Caco-2 (cell line): ENCODE measurements at regions of chr12 and their contacts with region 1.

Region 1: DNA sequence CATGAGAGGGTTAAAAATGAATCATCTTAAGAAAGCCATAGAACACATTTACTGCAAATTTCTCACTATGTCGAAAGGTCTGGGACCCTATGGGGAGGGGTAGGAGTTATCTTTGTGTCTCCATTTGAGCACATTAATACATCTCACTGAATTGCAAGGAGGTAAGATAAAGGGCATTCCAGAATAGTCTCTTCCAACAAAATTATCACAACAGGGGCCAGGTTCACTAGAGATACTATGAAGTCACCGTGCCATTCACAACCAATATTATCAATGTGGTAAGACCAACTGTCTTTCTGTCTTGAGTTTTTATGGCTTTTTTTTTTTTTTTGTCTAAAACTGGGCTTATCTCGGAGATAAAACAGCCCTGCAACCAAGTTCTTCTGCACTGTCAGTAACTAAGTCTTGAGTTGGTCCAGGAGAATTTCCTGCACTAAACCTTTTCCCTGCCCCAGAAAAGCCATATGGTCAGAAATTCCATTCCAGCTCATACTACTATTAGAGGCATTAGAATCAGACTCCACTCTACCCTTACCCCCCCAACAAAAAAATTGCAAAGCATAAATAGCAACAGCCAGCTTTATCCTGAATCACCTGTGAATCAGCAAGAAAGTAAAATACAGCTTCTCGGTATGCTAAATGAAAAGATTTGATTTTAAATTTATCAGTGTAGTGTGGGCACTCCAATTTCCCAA is 79.7 kb downstream of the PTPRR start:
- DNase-seq: peak in 1 of 2 experiments; percentile 44
- H3K4me3 ChIP-seq: no peak overlapping the region
- H3K4me3 Mint-ChIP-seq: no peak overlapping the region
- H3K27ac Mint-ChIP-seq: peak overlapping the region; percentile 48
- H3K4me1 ChIP-seq: peaks cover 31% of the 10 kb centered on the region
- H3K4me1 Mint-ChIP-seq: peaks cover 21% of the 10 kb centered on the region
- H3K27me3 ChIP-seq: no peaks in the 10 kb centered on the region
- H3K27me3 Mint-ChIP-seq: no peaks in the 10 kb centered on the region
- CTCF ChIP-seq: no peak

Region 2: DNA sequence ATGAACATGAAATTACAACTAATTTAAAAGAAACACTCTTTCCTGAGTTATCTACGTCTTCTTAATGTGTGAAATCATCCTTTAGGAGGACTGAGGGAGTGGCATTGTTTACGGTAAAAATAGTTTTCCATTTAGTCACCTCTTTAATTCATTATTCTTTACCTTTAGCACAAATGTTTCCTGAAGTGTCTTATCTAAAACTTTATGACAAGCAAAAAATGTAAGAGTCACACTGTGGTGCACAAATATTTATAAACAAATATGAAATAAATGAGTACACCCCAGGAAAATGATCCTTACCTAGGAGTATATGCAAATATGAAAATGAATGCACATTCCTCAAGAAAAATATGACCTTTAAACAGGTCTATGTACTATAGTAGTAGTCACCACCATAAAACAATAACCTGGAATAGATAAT is 24.8 kb before region 1 on chr12:
- CTCF ChIA-PET with region 1: no interaction called
- POLR2A ChIA-PET with region 1: no interaction called
- intact Hi-C with region 1: loop called (anchors 1 kb)
- DNase-seq: no peak
- H3K4me3 ChIP-seq: no peak overlapping the region
- H3K4me3 Mint-ChIP-seq: no peak overlapping the region
- H3K27ac Mint-ChIP-seq: peak overlapping the region; percentile 73
- H3K4me1 ChIP-seq: peaks cover 15% of the 10 kb centered on the region
- H3K4me1 Mint-ChIP-seq: peaks cover 6% of the 10 kb centered on the region
- H3K27me3 ChIP-seq: no peaks in the 10 kb centered on the region
- H3K27me3 Mint-ChIP-seq: no peaks in the 10 kb centered on the region
- CTCF ChIP-seq: no peak

Region 3: GRCh38 chr12:70823182-70823976 is 17.4 kb before region 1 on chr12:
- CTCF ChIA-PET with region 1: no interaction called
- POLR2A ChIA-PET with region 1: no interaction called
- intact Hi-C with region 1: loop called (anchors 1 kb)
- DNase-seq: no peak
- H3K4me3 ChIP-seq: no peak overlapping the region
- H3K4me3 Mint-ChIP-seq: no peak overlapping the region
- H3K27ac Mint-ChIP-seq: peak overlapping the region; percentile 43
- H3K4me1 ChIP-seq: peaks cover 18% of the 10 kb centered on the region
- H3K4me1 Mint-ChIP-seq: peaks cover 34% of the 10 kb centered on the region
- H3K27me3 ChIP-seq: no peaks in the 10 kb centered on the region
- H3K27me3 Mint-ChIP-seq: no peaks in the 10 kb centered on the region
- CTCF ChIP-seq: no peak